ENCODE measurements at regions of chr1 and their contacts with region 1.

Region 1: GRCh38 chr1:234670967-234671626 is 61.1 kb upstream of the IRF2BP2 start:
- DNase-seq: peak; percentile 31
- ATAC-seq: peak; percentile 49
- H3K4me3 ChIP-seq: no peak overlapping the region
- H3K27ac ChIP-seq: peak overlapping the region; percentile 59
- H3K4me1 ChIP-seq: peaks cover 16% of the 10 kb centered on the region
- H3K27me3 ChIP-seq: no peaks in the 10 kb centered on the region
- CTCF ChIP-seq: no peak
- EP300 ChIP-seq: 0 out of 4 replicates have a peak, but pooled peaks of 1 of the 2 experiments have one; percentile 33
- POLR2A ChIP-seq: no peak
- RAD21 ChIP-seq: no peak

Region 2: DNA sequence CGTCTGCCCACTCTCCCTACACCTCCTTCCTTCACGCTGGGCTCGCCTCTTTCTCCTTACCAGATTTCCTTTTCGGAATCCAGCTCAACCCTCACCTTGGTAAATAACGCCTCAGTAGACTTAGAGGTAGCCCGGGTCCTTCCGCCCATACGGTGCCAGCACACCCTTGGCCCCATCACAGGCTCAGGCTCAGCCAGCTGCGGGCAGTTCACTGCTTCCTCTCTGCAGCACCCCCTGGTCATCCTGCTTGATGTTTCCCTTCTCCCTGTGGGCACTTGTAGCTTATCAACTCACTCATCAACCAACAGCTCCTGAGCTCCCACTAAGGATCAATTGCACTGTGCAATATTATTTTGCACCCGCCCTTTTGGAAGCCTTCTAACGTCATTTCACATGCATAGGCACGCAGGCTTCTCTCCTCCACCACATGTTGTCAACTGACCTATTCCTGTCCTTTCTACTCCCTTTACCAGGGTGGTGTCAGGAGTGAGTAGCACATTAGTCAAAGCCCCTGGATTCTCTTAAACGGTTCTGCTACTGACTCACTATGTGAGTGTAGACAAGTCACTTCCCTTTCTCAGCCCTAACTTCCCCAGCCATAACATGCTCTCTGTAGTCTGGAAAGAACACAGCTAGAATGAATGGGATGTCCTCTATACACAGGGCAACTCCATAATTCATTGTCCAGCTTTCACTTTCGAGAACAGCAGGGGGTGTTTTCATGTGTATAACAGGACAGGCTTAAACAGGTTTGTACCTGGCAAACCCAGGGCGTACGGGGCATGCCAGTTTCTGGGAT is 14.0 kb before region 1 on chr1:
- CTCF ChIA-PET with region 1: interaction called, 4 read pairs
- POLR2A ChIA-PET with region 1: interaction called, 4 read pairs
- RAD21 ChIA-PET with region 1: interaction called, 3 read pairs
- SMC1A ChIA-PET with region 1: interaction called, 15 read pairs
- in situ Hi-C with region 1: no loop called
- intact Hi-C with region 1: no loop called
- DNase-seq: no peak
- ATAC-seq: peak; percentile 88
- H3K4me3 ChIP-seq: no peak overlapping the region
- H3K27ac ChIP-seq: no peak overlapping the region
- H3K4me1 ChIP-seq: peaks cover 11% of the 10 kb centered on the region
- H3K27me3 ChIP-seq: no peaks in the 10 kb centered on the region
- CTCF ChIP-seq: no peak
- EP300 ChIP-seq: no peak
- POLR2A ChIP-seq: no peak
- RAD21 ChIP-seq: 0 out of 2 replicates have a peak, but pooled peaks have one; percentile 5

Region 3: DNA sequence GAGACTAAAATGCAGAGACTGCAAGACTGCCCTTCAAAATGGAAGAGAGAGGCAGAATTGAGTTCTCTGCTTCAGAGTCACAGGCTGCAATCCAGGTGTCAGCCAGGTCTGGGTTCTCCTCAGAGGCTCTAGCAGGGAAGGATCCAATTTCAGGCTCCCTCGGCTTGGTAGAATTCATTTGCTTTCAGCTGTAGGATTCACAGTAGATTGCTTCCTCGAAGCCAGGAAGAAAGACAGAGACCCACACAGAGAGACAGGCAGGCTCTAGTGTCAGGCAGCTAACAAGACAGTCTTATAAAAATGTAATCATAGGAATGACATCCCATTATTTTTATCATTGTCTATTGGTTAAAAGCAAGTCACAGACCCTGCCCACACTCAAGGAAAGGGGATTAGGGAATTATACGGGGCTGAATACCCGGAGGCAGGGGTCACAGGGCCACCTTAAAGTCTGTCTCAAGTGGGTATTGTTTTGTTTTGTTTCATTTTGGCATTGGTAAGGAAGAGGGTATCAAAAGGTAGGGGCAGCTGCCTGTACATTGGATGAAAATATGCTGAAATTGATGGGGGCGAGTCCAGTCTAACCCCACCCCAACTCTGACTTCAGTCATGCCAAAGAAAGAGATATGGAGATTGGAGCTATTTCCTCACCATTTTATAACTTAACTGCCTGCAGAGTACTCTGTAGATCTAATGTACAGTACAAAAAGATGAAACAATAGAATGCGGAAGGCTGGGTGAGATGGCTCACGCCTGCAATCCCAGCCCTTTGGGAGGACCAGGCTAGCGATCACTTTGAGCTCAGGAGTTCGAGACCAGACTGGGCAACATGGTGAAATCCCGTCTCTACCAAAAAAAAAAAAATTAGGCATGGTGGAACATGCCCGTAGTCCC is 686.6 kb after region 1 on chr1:
- CTCF ChIA-PET with region 1: no interaction called
- POLR2A ChIA-PET with region 1: no interaction called
- RAD21 ChIA-PET with region 1: no interaction called
- SMC1A ChIA-PET with region 1: no interaction called
- in situ Hi-C with region 1: no loop called
- intact Hi-C with region 1: no loop called
- DNase-seq: no peak
- ATAC-seq: peak; percentile 17
- H3K4me3 ChIP-seq: no peak overlapping the region
- H3K27ac ChIP-seq: no peak overlapping the region
- H3K4me1 ChIP-seq: no peaks in the 10 kb centered on the region
- H3K27me3 ChIP-seq: no peaks in the 10 kb centered on the region
- CTCF ChIP-seq: no peak
- EP300 ChIP-seq: no peak
- POLR2A ChIP-seq: no peak
- RAD21 ChIP-seq: no peak

Measured in GM12878 (cell line).